CD14-positive monocyte (primary cell): ENCODE measurements at regions of chr10 and their contacts with region 1.

Region 1: GRCh38 chr10:62804356-62805230 is at the start of gene ADO:
- DNase-seq: peak; percentile 71 to 75 (median 72)
- H3K4me3 ChIP-seq: peak within 1 kb of the TSS; percentile 69 to 91 (median 70)
- H3K4me3 Mint-ChIP-seq: peak within 1 kb of the TSS; percentile 94 to 99
- H3K27ac ChIP-seq: peak within 1 kb of the TSS; percentile 87 to 94
- H3K27ac Mint-ChIP-seq: peak within 1 kb of the TSS; percentile 96 to 100 (median 99)
- H3K4me1 ChIP-seq: peaks cover 22 to 30% of the 10 kb centered on the region in 2 donors
- H3K4me1 Mint-ChIP-seq: peaks cover 36% of the 10 kb centered on the region
- H3K27me3 ChIP-seq: peaks cover 0 to 3% of the 10 kb centered on the region in 2 donors
- H3K27me3 Mint-ChIP-seq: peaks cover 2 to 8% (median 3%) of the 10 kb centered on the region in 3 donors
- CTCF ChIP-seq: no peak
- polyA plus RNA-seq, gene ADO: 5.7 to 7.0 (median 6.2) TPM

Region 2: DNA sequence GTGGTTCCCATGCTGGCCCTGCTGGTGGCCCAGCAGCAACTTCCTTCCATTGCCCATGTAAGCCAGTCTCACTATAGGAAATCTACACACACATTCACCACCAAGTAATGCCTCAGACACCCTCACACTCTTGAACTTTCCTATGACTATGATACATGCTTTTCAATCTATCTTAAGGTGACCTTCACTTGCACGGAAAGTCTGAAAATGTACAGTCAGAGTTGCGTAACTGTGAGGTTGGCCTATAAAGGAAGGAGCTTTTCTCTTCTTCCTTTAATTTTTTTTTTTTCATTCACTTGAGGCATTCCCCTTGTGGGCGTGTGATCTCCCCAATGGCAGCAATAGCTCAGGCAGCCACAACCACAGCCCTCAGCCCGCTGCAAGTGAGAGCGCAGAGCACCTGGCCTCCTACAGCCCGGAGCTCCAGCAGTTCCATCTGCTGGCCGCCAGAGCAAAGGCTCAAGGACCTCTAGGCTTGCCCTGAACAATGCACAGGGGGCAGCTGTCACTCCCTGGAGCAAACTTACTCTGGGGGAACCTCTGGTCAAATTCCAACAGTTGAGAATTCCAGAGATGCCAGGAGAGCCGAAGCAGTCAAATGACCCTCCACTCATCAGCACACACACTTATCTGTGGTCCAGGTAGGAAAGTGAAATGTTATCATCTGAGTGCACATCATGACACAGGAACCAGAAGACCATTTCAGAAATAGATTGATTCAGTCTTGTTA is 123.2 kb before region 1 on chr10:
- intact Hi-C with region 1: no loop called
- DNase-seq: peak; percentile 85 to 99 (median 94)
- H3K4me3 ChIP-seq: peak overlapping the region in 1 of 3 experiments; percentile 1
- H3K4me3 Mint-ChIP-seq: peak overlapping the region in 1 of 2 donors; percentile 20
- H3K27ac ChIP-seq: peak overlapping the region; percentile 21 to 62
- H3K27ac Mint-ChIP-seq: peak overlapping the region; percentile 30 to 88 (median 53)
- H3K4me1 ChIP-seq: peaks cover 16 to 18% of the 10 kb centered on the region in 2 donors
- H3K4me1 Mint-ChIP-seq: peaks cover 26% of the 10 kb centered on the region
- H3K27me3 ChIP-seq: no peaks in the 10 kb centered on the region
- H3K27me3 Mint-ChIP-seq: no peaks in the 10 kb centered on the region
- CTCF ChIP-seq: peak; percentile 26

Region 3: GRCh38 chr10:62742536-62743061 is 62.0 kb before region 1 on chr10:
- intact Hi-C with region 1: loop called in 1 of 2 experiments (anchors 5 kb)
- DNase-seq: peak; percentile 66 to 90 (median 78)
- H3K4me3 ChIP-seq: no peak overlapping the region
- H3K4me3 Mint-ChIP-seq: peak overlapping the region; percentile 42 to 57
- H3K27ac ChIP-seq: peak overlapping the region; percentile 37 to 64
- H3K27ac Mint-ChIP-seq: peak overlapping the region; percentile 85 to 95 (median 92)
- H3K4me1 ChIP-seq: peaks cover 24 to 34% of the 10 kb centered on the region in 2 donors
- H3K4me1 Mint-ChIP-seq: peaks cover 37% of the 10 kb centered on the region
- H3K27me3 ChIP-seq: no peaks in the 10 kb centered on the region
- H3K27me3 Mint-ChIP-seq: peaks cover 1 to 5% (median 2%) of the 10 kb centered on the region in 3 donors
- CTCF ChIP-seq: no peak

Region 4: DNA sequence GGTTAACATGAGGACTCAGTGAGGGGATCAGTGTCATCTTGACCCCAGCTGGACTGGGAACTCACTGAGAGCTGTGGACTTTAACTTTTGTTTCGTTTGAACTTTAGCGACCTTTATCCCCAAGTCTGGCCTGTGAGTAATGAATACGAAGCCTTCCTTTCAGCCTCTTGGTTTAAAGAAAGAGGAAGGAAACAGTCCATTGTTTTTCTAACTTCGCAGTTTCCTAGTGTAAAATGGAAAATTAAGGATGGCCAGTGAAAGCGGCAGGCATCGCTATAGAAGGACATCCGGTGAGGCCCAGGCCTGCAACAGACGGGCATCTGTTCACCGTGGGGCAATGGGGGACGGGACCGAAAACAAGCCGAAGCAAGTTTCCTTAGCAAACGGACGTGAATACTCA is 44.2 kb before region 1 on chr10:
- intact Hi-C with region 1: loop called in 1 of 2 experiments (anchors 5 kb)
- DNase-seq: peak; percentile 61 to 73 (median 71)
- H3K4me3 ChIP-seq: peak overlapping the region in 1 of 3 experiments; percentile 22
- H3K4me3 Mint-ChIP-seq: peak overlapping the region; percentile 45 to 81
- H3K27ac ChIP-seq: peak overlapping the region; percentile 49 to 82
- H3K27ac Mint-ChIP-seq: peak overlapping the region; percentile 87 to 93 (median 89)
- H3K4me1 ChIP-seq: peaks cover 24 to 26% of the 10 kb centered on the region in 2 donors
- H3K4me1 Mint-ChIP-seq: peaks cover 30% of the 10 kb centered on the region
- H3K27me3 ChIP-seq: no peaks in the 10 kb centered on the region
- H3K27me3 Mint-ChIP-seq: peaks cover 2 to 6% (median 3%) of the 10 kb centered on the region in 3 donors
- CTCF ChIP-seq: no peak

Region 5: DNA sequence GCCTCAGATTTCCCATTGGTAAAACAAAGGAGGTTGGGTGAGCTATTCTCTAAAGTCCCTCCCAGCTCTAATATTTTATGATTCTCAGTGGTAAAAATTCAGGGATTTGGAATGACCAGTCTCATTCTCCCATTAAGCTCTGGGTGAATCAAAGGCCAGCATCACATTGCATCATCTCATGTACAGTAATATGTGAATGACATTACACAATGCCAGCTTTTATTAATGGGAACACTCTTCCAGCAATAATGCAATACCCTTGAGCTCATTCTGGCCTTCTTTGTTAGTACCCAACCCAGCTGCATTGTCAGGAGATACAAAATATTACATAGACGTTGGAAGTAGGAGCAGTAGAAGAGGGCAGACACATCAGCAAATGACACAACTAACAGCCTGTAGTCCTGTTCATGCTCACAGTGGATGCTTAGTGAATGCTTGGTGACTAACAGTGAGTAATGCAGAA is 111.6 kb after region 1 on chr10:
- intact Hi-C with region 1: no loop called
- DNase-seq: peak; percentile 3 to 46 (median 12)
- H3K4me3 ChIP-seq: no peak overlapping the region
- H3K4me3 Mint-ChIP-seq: no peak overlapping the region
- H3K27ac ChIP-seq: no peak overlapping the region
- H3K27ac Mint-ChIP-seq: no peak overlapping the region
- H3K4me1 ChIP-seq: peaks cover 3 to 12% of the 10 kb centered on the region in 2 donors
- H3K4me1 Mint-ChIP-seq: peaks cover 22% of the 10 kb centered on the region
- H3K27me3 ChIP-seq: no peaks in the 10 kb centered on the region
- H3K27me3 Mint-ChIP-seq: peaks cover 3 to 7% (median 3%) of the 10 kb centered on the region in 3 donors
- CTCF ChIP-seq: no peak